IMR-90 (cell line): ENCODE measurements at regions of chr15 and their contacts with region 1.

Region 1: DNA sequence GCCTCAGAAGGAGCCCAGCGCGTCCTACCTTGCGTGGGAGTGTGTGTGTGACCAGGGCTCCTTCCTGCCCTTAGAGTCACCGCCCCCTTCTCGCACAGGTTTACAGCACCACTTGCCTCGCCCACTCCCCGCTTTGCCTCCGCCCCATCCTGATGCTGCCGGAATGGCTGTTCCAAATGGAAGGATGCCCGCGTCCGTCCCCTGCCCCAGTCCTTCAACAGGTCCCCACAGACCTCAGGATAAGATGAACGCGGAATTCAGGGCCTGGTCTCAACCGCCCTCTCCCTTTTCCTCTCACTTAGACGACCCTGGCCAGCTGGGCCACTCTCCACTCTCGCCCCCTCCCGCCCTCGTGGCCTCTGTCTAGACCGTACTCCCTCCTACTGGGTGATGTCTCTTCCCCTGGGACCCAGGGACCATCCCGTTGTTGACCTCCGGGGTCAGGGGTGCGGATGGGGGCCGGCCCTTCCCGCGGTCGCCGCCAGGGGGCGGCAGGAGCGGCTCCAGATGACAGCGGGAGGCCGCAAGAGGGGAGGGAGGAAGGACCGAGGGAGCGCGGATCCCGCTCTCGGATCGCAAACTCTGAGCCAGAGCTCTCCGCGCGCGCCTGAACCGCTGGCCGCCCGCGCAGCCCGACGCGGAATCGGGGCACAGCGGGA is at the start of gene THSD4:
- DNase-seq: peak; percentile 72
- ATAC-seq: peak; percentile 85
- H3K4me3 ChIP-seq: peak within 1 kb of the TSS; percentile 96
- H3K27ac ChIP-seq: peak within 1 kb of the TSS; percentile 92
- H3K4me1 ChIP-seq: peaks cover 19% of the 10 kb centered on the region
- H3K27me3 ChIP-seq: no peaks in the 10 kb centered on the region
- CTCF ChIP-seq: peak; percentile 85
- POLR2A ChIP-seq: no peak
- RAD21 ChIP-seq: peak; percentile 76
- total RNA-seq, gene THSD4: 25.5 and 31.1 TPM in 2 replicates

Region 2: DNA sequence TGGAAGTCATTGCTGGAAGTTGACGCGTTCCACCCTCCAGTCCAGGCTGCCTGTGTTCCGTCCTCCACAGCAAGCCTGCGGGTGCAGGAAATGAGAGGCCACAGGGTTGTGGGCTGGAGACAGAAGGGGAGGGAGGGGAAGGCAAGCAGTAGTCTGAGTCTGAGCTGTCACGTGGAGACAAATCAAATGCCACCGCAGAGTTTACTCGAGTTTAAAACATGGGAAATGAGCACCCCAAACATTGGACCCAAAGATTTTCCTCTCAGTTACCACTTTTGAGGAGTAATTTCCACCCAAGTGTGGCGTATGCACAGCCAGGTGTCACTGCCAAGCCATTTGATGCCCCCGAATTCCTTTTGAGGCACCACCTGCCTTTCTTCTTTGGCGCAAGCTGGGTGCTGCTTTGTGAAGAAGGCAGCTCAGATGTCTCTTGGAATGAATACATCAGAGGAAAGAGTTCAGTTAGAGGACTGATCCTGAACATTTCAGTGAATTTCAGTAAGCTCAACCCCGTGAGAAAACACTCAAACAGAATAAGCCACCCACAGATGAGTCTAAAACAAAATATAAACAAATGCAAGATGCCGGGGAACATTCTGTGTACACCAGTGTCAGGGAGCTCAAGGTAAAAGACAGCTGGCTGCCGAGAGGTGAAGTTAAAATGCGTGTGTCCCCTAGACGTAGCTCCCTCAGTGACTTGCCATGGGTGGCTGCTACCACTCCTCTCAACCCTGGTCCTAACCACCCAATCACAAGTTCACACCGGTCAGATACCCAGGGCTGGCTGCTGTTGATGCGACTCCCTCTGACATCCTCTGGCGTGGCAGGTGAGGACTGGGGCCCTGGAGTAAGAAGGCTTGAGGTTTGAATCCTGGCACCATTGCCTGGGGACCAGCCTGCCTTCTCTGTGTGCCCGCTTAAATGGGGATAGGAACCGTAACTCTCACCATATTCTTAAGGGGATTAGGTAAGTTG is 555.5 kb before region 1 on chr15:
- CTCF ChIA-PET with region 1: no interaction called
- POLR2A ChIA-PET with region 1: no interaction called
- dilution Hi-C with region 1: no loop called
- in situ Hi-C with region 1: no loop called
- intact Hi-C with region 1: no loop called
- DNase-seq: peak; percentile 44
- ATAC-seq: peak; percentile 89
- H3K4me3 ChIP-seq: no peak overlapping the region
- H3K27ac ChIP-seq: no peak overlapping the region
- H3K4me1 ChIP-seq: peaks cover 11% of the 10 kb centered on the region
- H3K27me3 ChIP-seq: peaks cover 70% of the 10 kb centered on the region
- CTCF ChIP-seq: no peak
- POLR2A ChIP-seq: no peak
- RAD21 ChIP-seq: no peak

Region 3: DNA sequence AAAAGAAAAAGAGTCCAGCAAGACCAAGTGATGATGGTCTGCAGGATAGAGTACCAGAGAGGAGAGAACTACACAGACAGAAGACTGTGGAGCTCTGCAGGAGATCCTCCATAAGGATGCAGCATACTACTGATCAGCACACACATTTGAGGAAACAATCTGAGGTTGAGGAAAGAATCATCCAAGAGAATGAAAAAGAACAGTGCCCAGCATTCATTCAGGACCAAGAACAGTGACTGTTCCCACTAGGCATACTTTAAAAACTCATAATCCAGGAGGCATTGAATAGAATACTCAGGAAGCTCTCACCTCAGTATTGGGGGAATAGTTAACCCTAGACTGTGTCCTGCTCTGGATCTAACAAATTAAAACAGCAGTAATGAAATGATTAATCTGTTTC is 55.1 kb after region 1 on chr15:
- CTCF ChIA-PET with region 1: no interaction called
- POLR2A ChIA-PET with region 1: no interaction called
- dilution Hi-C with region 1: no loop called
- in situ Hi-C with region 1: no loop called
- intact Hi-C with region 1: no loop called
- DNase-seq: no peak
- ATAC-seq: no peak
- H3K4me3 ChIP-seq: no peak overlapping the region
- H3K27ac ChIP-seq: no peak overlapping the region
- H3K4me1 ChIP-seq: no peaks in the 10 kb centered on the region
- H3K27me3 ChIP-seq: no peaks in the 10 kb centered on the region
- CTCF ChIP-seq: no peak
- POLR2A ChIP-seq: no peak
- RAD21 ChIP-seq: no peak

Region 4: GRCh38 chr15:71207141-71207540 is 92.1 kb after region 1 on chr15:
- CTCF ChIA-PET with region 1: no interaction called
- POLR2A ChIA-PET with region 1: no interaction called
- dilution Hi-C with region 1: no loop called
- in situ Hi-C with region 1: no loop called
- intact Hi-C with region 1: no loop called
- DNase-seq: no peak
- ATAC-seq: no peak
- H3K4me3 ChIP-seq: no peak overlapping the region
- H3K27ac ChIP-seq: no peak overlapping the region
- H3K4me1 ChIP-seq: peaks cover 9% of the 10 kb centered on the region; the same call in 1 of the 2 replicates
- H3K27me3 ChIP-seq: no peaks in the 10 kb centered on the region
- CTCF ChIP-seq: no peak
- POLR2A ChIP-seq: no peak
- RAD21 ChIP-seq: no peak

Region 5: GRCh38 chr15:71219645-71220044 is 104.6 kb after region 1 on chr15:
- CTCF ChIA-PET with region 1: no interaction called
- POLR2A ChIA-PET with region 1: interaction called, 3 read pairs
- dilution Hi-C with region 1: no loop called
- in situ Hi-C with region 1: no loop called
- intact Hi-C with region 1: loop called (anchors 5 kb)
- DNase-seq: peak; percentile 94
- ATAC-seq: peak; percentile 71
- H3K4me3 ChIP-seq: no peak overlapping the region
- H3K27ac ChIP-seq: peak overlapping the region; percentile 95
- H3K4me1 ChIP-seq: peaks cover 24% of the 10 kb centered on the region
- H3K27me3 ChIP-seq: no peaks in the 10 kb centered on the region
- CTCF ChIP-seq: no peak
- POLR2A ChIP-seq: no peak
- RAD21 ChIP-seq: no peak

Region 6: GRCh38 chr15:71329497-71330260 is 214.7 kb after region 1 on chr15:
- CTCF ChIA-PET with region 1: no interaction called
- POLR2A ChIA-PET with region 1: interaction called, 3 read pairs
- dilution Hi-C with region 1: no loop called
- in situ Hi-C with region 1: no loop called
- intact Hi-C with region 1: loop called (anchors 5 kb)
- DNase-seq: peak; percentile 46
- ATAC-seq: no peak
- H3K4me3 ChIP-seq: no peak overlapping the region
- H3K27ac ChIP-seq: peak overlapping the region; percentile 62
- H3K4me1 ChIP-seq: peaks cover 61% of the 10 kb centered on the region
- H3K27me3 ChIP-seq: no peaks in the 10 kb centered on the region
- CTCF ChIP-seq: no peak
- POLR2A ChIP-seq: no peak
- RAD21 ChIP-seq: no peak

Region 7: DNA sequence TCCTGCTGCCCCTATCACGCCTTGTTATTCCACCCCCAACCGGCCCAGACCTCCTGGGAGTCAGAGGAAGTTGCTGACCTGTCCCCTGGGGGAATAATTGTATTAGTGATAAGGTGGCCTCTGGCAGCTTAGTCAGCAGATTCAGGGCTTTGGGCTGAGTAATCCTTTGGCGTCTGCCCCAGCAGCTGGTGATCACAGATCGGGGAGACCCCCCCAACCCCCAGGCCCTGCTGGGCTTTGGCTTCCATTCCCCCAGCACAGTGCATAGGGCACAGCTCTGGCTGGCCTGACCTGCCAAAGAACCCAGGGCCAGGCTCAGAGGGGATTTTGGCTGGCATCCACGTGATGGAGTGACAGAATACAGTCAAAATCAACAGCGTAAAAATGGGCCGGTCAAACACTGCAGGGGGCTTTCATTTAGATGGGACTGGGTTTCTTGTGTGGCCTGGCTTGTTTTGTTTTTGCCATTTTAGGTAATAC is 691.5 kb after region 1 on chr15:
- CTCF ChIA-PET with region 1: no interaction called
- POLR2A ChIA-PET with region 1: no interaction called
- dilution Hi-C with region 1: no loop called
- in situ Hi-C with region 1: loop called (anchors 5 kb)
- intact Hi-C with region 1: no loop called
- DNase-seq: peak; percentile 69
- ATAC-seq: peak; percentile 51
- H3K4me3 ChIP-seq: no peak overlapping the region
- H3K27ac ChIP-seq: no peak overlapping the region
- H3K4me1 ChIP-seq: peaks cover 15% of the 10 kb centered on the region
- H3K27me3 ChIP-seq: no peaks in the 10 kb centered on the region
- CTCF ChIP-seq: no peak
- POLR2A ChIP-seq: no peak
- RAD21 ChIP-seq: no peak